Activated T-helper 1 cell treated with anti-CD3 and anti-CD28 coated beads, Interleukin-12 subunit alpha, Interleukin-12 subunit beta, Interleukin-2, Interleukin-4 antibody, amounts not matched to agents 30 ng/mL and 10 ng/mL and 1 ng/mL, durations not matched to agents 14 hours and 24 hours and 36 hours (primary cell): ENCODE measurements at regions of chr11 and their contacts with region 1.

Region 1: GRCh38 chr11:47932544-47932943 is 47.8 kb upstream of the PTPRJ start:
- DNase-seq: no peak
- H3K4me3 Mint-ChIP-seq: no peak overlapping the region
- H3K27ac Mint-ChIP-seq: no peak overlapping the region
- H3K4me1 Mint-ChIP-seq: peaks cover 23% of the 10 kb centered on the region
- H3K27me3 Mint-ChIP-seq: no peaks in the 10 kb centered on the region

Region 2: DNA sequence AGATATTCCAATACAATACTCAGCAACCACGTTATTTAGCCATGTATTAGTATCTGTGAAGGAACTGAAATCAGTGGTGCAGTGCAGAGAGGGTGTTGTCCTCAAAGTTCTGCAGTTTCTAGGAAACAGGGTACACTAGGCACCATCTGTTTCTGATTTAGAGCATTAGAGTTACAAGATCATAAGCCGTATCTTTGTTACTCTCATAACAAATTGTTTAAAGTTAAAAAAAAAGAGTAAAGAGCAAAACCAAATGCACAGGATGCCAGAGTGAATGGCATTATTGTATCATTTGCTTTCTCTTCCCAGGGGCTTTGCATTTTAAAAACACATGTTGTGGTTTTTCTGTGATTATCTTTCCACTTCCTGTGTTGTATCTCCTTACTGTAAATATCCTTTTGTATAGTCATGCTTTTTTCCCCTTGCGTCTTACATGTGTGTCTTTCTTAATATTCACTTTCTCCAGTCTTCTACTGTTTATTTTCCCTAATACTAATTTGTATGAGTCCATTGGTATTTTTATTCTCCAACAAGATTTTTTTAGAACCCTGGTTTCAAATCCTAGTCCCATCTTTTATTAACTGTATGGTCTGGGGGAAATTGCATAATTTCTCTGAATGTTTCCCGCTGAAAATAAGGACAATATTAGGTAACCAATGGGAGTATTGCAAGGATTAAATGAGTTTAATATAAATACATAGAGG is 69.2 kb before region 1 on chr11:
- intact Hi-C with region 1: loop called (anchors 5 kb)
- DNase-seq: no peak
- H3K4me3 Mint-ChIP-seq: peak overlapping the region; percentile 57
- H3K27ac Mint-ChIP-seq: peak overlapping the region; percentile 21
- H3K4me1 Mint-ChIP-seq: peaks cover 33% of the 10 kb centered on the region
- H3K27me3 Mint-ChIP-seq: no peaks in the 10 kb centered on the region

Region 3: GRCh38 chr11:47967577-47968425 is 35.3 kb after region 1 on chr11:
- intact Hi-C with region 1: no loop called
- DNase-seq: no peak
- H3K4me3 Mint-ChIP-seq: no peak overlapping the region
- H3K27ac Mint-ChIP-seq: no peak overlapping the region
- H3K4me1 Mint-ChIP-seq: no peaks in the 10 kb centered on the region
- H3K27me3 Mint-ChIP-seq: peaks cover 2% of the 10 kb centered on the region

Region 4: DNA sequence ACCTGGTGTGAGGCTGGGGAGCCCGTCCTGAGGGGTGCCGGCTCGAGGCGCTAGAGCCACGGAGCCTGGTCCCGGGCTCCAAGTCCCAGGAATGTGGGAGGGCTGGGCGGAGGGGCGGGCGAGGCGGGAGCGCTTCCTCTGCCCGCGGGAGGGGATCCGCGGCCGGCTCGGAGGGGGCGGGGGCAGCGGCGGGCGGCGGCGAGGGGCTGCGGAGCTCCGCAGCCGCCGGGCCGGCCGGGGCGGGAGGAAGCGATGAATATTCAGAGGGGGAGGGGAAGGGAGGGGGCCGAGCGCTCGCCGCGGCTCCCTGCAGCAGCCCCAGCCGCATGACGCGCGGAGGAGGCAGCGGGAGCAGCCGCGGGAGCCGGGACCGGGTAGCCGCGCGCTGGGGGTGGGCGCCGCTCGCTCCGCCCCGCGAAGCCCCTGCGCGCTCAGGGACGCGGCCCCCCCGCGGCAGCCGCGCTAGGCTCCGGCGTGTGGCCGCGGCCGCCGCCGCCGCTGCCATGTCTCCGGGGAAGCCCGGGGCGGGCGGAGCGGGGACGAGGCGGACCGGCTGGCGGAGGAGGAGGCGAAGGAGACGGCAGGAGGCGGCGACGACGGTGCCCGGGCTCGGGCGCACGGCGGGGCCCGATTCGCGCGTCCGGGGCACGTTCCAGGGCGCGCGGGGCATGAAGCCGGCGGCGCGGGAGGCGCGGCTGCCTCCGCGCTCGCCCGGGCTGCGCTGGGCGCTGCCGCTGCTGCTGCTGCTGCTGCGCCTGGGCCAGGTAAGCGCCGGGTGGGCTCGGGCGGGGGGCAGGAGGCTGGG is 47.9 kb after region 1 on chr11 and contains the start of gene PTPRJ:
- intact Hi-C with region 1: loop called (anchors 1 kb)
- DNase-seq: peak; percentile 60
- H3K4me3 Mint-ChIP-seq: peak within 1 kb of the TSS; percentile 92
- H3K27ac Mint-ChIP-seq: peak within 1 kb of the TSS; percentile 54
- H3K4me1 Mint-ChIP-seq: peaks cover 26% of the 10 kb centered on the region
- H3K27me3 Mint-ChIP-seq: peaks cover 12% of the 10 kb centered on the region
- total RNA-seq, gene PTPRJ: 69.6 and 70.3 TPM in 2 replicates

Region 5: GRCh38 chr11:48307760-48308386 is 375.3 kb after region 1 on chr11:
- intact Hi-C with region 1: loop called (anchors 2 kb)
- DNase-seq: peak; percentile 43
- H3K4me3 Mint-ChIP-seq: no peak overlapping the region
- H3K27ac Mint-ChIP-seq: no peak overlapping the region
- H3K4me1 Mint-ChIP-seq: no peaks in the 10 kb centered on the region
- H3K27me3 Mint-ChIP-seq: peaks cover 10% of the 10 kb centered on the region